Naive thymus-derived CD4-positive, alpha-beta T cell (primary cell): ENCODE measurements at regions of chr1 and their contacts with region 1.

Region 1: DNA sequence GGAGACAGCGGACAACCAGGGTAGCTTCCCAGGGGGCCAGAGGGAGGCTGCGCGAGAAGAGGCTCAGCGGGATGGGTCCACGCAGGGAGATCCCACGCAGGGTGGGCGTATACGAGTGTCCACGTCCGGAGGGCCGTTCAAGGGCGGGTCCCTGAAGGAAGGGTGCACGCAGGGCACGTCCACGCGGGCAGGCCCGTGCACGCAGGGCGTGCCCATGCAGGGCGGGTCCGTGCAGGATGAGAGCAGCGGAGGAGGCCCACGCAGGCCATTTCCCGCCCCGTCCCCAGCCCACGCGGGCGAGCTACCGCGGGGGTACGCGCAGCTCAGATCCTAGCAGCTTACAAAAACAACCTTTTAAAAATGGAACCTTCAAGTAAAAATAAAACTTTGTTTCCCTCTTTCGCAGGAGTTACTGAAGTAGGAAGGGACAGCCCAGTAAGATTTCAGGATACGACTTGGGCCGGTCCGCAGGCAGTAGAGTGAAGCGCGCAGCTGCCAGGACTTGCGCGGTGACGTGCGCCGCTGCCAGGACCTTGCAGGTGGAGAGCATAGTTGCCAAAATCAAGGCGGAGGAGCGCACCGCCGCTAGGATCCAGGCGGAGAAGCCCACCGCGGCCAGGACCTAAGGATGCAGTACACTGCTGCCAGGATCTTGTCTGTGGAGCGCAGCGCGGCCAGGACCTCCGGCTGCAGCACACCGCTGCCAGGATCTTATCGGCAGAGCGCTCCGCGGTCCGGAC is 416 bp upstream of the RNF187 start:
- DNase-seq: peak; percentile 76 to 91 (median 86)
- ATAC-seq: peak; percentile 85
- H3K4me3 ChIP-seq: peak overlapping the region; percentile 98
- H3K4me3 Mint-ChIP-seq: peak overlapping the region; percentile 92 to 99 (median 98)
- H3K27ac ChIP-seq: peak overlapping the region; percentile 99
- H3K27ac Mint-ChIP-seq: peak overlapping the region; percentile 99 to 100 (median 100)
- H3K4me1 ChIP-seq: peaks cover 15 to 19% of the 10 kb centered on the region in 2 donors
- H3K4me1 Mint-ChIP-seq: peaks cover 14 to 49% (median 36%) of the 10 kb centered on the region in 7 donors
- H3K27me3 ChIP-seq: no peaks in the 10 kb centered on the region
- H3K27me3 Mint-ChIP-seq: no peaks in the 10 kb centered on the region

Region 2: GRCh38 chr1:227816750-227817446 is 669.9 kb before region 1 on chr1:
- CTCF ChIA-PET with region 1: no interaction called
- POLR2A ChIA-PET with region 1: no interaction called
- intact Hi-C with region 1: no loop called
- DNase-seq: no peak
- ATAC-seq: peak; percentile 53
- H3K4me3 ChIP-seq: no peak overlapping the region
- H3K4me3 Mint-ChIP-seq: no peak overlapping the region
- H3K27ac ChIP-seq: no peak overlapping the region
- H3K27ac Mint-ChIP-seq: no peak overlapping the region
- H3K4me1 ChIP-seq: no peaks in the 10 kb centered on the region
- H3K4me1 Mint-ChIP-seq: peaks cover 0 to 5% (median 0%) of the 10 kb centered on the region in 7 donors
- H3K27me3 ChIP-seq: no peaks in the 10 kb centered on the region
- H3K27me3 Mint-ChIP-seq: peaks cover 0 to 5% (median 0%) of the 10 kb centered on the region in 5 donors

Region 3: DNA sequence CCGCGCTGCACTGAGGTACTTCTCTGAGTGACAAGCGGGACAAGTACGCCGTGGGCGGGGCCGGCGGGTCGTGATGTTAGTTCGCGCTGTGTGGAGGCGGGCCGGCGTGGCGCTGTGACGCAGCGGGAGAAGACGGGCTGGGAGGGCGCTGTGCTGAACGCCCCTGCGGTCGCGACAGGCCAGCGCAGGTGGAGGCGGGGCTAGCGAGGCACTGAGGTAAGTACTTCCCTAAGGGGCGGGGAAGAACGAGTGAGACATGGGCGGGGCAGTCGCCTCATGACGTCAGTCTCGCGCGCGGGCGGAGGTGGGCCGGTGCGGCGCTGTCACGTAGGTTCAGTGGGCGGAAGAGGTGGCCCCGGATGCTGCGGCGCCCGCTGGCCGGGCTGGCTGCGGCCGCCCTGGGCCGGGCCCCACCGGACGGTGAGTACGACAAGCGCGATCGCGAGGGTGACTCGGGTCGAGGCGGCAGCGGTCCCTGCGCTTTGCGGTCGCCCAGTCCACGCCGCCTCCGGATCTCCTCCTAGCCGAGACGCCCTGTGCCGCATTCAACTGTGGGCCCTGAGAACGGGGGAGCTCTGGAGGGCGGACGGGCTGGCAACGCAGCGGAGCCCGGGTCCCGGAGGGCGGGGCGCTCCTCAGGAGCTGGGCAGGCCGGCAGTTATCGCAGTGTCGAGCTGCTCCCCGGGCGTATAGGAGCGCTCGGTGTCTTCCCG is 346.7 kb before region 1 on chr1 and contains the start of gene GUK1:
- CTCF ChIA-PET with region 1: no interaction called
- POLR2A ChIA-PET with region 1: no interaction called
- intact Hi-C with region 1: loop called (anchors 1 kb)
- DNase-seq: peak; percentile 98 to 100 (median 100)
- ATAC-seq: peak; percentile 93
- H3K4me3 ChIP-seq: peak within 1 kb of the TSS; percentile 88
- H3K4me3 Mint-ChIP-seq: peak within 1 kb of the TSS; percentile 87 to 99 (median 95)
- H3K27ac ChIP-seq: peak within 1 kb of the TSS; percentile 99
- H3K27ac Mint-ChIP-seq: peak within 1 kb of the TSS; percentile 83 to 100 (median 99)
- H3K4me1 ChIP-seq: peaks cover 42 to 49% of the 10 kb centered on the region in 2 donors
- H3K4me1 Mint-ChIP-seq: peaks cover 23 to 48% (median 34%) of the 10 kb centered on the region in 7 donors
- H3K27me3 ChIP-seq: no peaks in the 10 kb centered on the region
- H3K27me3 Mint-ChIP-seq: peaks cover 0 to 24% (median 0%) of the 10 kb centered on the region in 5 donors
- total RNA-seq, gene GUK1: 145 to 309 (median 279) TPM

Region 4: DNA sequence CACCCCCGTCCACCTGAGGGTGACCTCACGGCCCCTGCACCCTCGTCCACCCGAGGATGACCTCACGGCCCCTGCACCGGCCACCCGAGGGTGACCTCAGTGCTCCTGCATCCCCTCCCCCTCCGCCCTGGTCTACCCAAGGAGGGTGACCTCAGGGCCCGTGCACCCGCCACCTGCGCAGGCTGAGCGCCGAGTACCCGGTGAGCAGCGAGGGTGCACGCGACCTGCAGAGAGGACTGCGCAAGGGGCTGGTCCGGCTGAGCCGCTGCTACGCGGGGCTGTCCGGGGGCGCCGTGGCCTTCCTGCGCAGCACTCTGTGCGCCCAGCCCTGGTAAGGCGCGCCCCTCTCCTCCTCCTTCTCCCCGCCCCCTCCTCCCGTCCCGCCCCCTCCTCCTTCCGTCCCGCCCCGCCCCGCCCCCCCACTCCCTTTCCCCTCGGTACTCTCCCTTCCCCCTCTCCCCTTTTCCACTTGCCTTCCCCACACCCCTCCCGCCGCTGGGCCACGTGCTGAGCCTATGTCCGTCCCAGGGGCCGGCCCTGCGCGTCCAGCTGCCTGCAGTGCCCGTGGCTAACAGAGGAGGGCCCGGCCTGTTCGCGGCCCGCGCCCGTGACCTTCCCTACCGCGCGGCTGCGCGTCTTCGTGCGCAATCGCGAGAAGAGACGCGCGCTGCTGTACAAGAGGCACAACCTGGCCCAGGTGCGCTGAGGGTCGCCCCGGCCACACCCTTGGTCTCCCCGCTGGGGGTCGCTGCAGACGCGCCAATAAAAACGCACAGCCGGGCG is 108.5 kb before region 1 on chr1:
- CTCF ChIA-PET with region 1: no interaction called
- POLR2A ChIA-PET with region 1: no interaction called
- intact Hi-C with region 1: loop called in 1 of 2 experiments (anchors 2 kb)
- DNase-seq: peak; percentile 37 to 75 (median 61)
- ATAC-seq: peak; percentile 58
- H3K4me3 ChIP-seq: peak overlapping the region; percentile 37
- H3K4me3 Mint-ChIP-seq: peak overlapping the region; percentile 80 to 90 (median 84)
- H3K27ac ChIP-seq: no peak overlapping the region
- H3K27ac Mint-ChIP-seq: peak overlapping the region in 4 of 9 donors; percentile 28 to 72 (median 51)
- H3K4me1 ChIP-seq: no peaks in the 10 kb centered on the region
- H3K4me1 Mint-ChIP-seq: peaks cover 6 to 18% (median 8%) of the 10 kb centered on the region in 7 donors
- H3K27me3 ChIP-seq: peaks cover 0 to 4% of the 10 kb centered on the region in 2 donors
- H3K27me3 Mint-ChIP-seq: peaks cover 0 to 42% (median 9%) of the 10 kb centered on the region in 5 donors

Region 5: DNA sequence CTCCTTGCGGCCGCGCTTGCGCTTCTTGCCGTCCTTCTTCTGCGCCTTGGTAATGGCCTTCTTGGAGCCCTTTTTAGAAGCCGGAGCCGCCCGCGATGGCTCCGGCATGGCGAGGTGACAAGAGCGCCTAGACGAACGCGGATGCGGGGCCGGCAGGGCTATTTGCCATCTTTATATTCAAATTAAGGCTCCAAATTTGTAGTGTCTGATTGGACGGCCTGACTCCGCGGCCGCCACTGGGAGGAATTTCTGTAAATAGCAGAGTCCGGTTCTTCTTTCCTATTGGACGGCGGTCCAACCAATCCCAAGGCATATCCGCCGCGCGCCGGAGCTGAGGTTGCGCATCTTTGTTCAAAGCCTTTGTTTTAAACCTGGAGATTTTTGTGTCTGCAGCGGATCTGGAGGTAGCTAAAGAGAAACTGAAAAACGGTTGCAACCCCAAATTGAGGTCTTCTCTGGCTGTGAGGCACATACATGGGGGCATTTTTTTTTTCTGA is 22.2 kb before region 1 on chr1:
- CTCF ChIA-PET with region 1: interaction called, 8 read pairs
- POLR2A ChIA-PET with region 1: interaction called, 38 read pairs
- intact Hi-C with region 1: loop called (anchors 1 kb)
- DNase-seq: peak; percentile 56 to 93 (median 85)
- ATAC-seq: peak; percentile 98
- H3K4me3 ChIP-seq: peak overlapping the region; percentile 62
- H3K4me3 Mint-ChIP-seq: peak overlapping the region; percentile 73 to 93 (median 82)
- H3K27ac ChIP-seq: peak overlapping the region; percentile 50
- H3K27ac Mint-ChIP-seq: peak overlapping the region; percentile 13 to 92 (median 62)
- H3K4me1 ChIP-seq: peaks cover 17 to 18% of the 10 kb centered on the region in 2 donors
- H3K4me1 Mint-ChIP-seq: peaks cover 24 to 66% (median 40%) of the 10 kb centered on the region in 7 donors
- H3K27me3 ChIP-seq: no peaks in the 10 kb centered on the region
- H3K27me3 Mint-ChIP-seq: peaks cover 11 to 34% (median 24%) of the 10 kb centered on the region in 5 donors

Region 6: DNA sequence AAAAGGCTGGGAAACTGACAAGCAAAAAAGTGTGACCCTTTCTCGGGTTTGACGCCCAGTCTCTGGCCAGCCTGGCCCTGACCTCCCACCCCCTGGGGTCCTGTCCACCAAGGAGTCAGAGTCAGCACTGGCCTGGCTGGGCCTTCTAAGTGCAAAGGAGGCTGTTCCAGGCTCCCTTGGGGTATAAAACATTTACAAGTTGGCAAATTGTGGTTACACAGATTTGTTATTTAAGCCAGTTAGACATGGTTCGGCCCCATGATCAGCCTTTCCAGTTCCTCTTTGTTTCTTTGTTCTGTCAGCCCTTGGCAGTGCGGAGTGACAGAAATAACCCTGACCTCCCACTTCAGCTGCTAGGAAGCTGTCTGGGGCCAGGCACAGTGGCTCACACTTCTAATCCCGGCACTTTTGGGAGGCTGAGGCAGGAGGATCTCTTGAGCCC is 622.6 kb after region 1 on chr1:
- CTCF ChIA-PET with region 1: no interaction called
- POLR2A ChIA-PET with region 1: no interaction called
- intact Hi-C with region 1: no loop called
- DNase-seq: no peak
- ATAC-seq: no peak
- H3K4me3 ChIP-seq: no peak overlapping the region
- H3K4me3 Mint-ChIP-seq: no peak overlapping the region
- H3K27ac ChIP-seq: no peak overlapping the region
- H3K27ac Mint-ChIP-seq: no peak overlapping the region
- H3K4me1 ChIP-seq: peaks cover 0 to 3% of the 10 kb centered on the region in 2 donors
- H3K4me1 Mint-ChIP-seq: peaks cover 4 to 19% (median 10%) of the 10 kb centered on the region in 7 donors
- H3K27me3 ChIP-seq: no peaks in the 10 kb centered on the region
- H3K27me3 Mint-ChIP-seq: peaks cover 0 to 12% (median 0%) of the 10 kb centered on the region in 5 donors

Region 7: DNA sequence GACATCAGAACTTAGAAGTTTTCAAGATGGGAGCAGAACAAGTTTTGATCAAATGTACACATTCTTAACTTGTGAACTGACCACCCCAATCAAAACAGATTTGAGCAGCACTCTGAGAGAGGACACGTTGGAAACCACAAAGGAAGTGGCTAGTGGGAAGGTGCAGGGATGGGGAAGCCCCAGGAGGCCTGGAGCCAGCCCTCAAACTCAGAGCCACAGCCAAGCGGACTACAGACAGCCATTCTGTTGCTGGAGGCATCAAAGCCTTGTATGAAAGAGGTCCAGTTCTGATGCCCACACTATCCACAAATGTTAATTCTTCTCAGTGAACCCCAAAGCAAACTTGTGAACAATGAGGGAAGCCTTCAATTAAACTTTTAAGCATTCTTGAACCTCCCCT is 640.5 kb after region 1 on chr1:
- CTCF ChIA-PET with region 1: no interaction called
- POLR2A ChIA-PET with region 1: no interaction called
- intact Hi-C with region 1: no loop called
- DNase-seq: peak in 1 of 9 donors; percentile 34
- ATAC-seq: no peak
- H3K4me3 ChIP-seq: no peak overlapping the region
- H3K4me3 Mint-ChIP-seq: peak overlapping the region in 8 of 10 donors; percentile 4 to 60 (median 40)
- H3K27ac ChIP-seq: no peak overlapping the region
- H3K27ac Mint-ChIP-seq: peak overlapping the region in 4 of 9 donors; percentile 57 to 92 (median 80)
- H3K4me1 ChIP-seq: peaks cover 41 to 46% of the 10 kb centered on the region in 2 donors
- H3K4me1 Mint-ChIP-seq: peaks cover 26 to 66% (median 56%) of the 10 kb centered on the region in 7 donors
- H3K27me3 ChIP-seq: no peaks in the 10 kb centered on the region
- H3K27me3 Mint-ChIP-seq: peaks cover 0 to 61% (median 0%) of the 10 kb centered on the region in 5 donors

Region 8: DNA sequence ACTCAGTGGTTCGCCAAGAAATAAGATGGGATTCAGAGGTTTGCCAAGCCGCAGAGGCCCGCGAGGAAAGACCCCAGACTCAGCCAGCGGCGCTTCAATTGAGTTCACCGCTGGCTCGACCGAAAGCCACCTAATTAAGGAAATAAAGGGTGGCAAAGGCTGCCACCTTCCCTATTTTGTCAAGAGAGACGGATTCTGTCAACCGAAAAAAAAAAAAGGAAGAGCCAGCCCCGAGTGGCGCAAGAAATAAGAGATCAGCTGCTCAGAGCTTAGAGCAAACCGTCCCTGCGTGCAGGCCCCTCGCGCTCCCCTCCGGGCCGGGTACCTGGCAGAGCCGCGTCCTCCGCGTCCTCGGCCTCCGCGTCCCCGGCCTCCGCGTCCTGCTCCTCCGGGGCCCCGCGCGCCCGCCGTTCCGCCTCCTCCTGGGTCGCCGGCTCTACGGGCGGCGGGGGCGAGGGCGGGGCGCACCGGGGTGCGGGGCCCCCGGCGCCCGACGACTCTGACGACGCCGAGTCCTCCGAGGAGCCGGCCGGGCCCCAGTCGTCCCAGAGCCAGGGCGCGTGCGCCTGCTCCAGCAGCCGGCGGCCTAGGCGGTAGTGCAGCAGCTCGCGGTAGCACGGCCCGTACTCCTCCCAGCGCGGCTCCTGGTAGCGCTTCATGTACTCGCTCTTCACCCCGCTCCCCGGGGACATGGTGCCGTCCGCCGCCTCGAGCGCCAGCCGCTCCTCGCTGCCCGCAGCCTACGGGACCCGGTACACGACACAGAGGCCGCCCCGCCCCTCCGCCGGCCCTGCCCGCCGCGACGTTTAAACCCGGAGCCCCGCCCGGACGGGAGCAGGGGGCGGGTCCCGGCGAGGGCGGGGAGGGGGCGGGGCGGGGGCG is 855.2 kb after region 1 on chr1:
- CTCF ChIA-PET with region 1: no interaction called
- POLR2A ChIA-PET with region 1: no interaction called
- intact Hi-C with region 1: loop called in 1 of 2 experiments (anchors 10 kb)
- DNase-seq: peak; percentile 78 to 87 (median 84)
- ATAC-seq: peak; percentile 92
- H3K4me3 ChIP-seq: peak overlapping the region; percentile 87
- H3K4me3 Mint-ChIP-seq: peak overlapping the region; percentile 88 to 96 (median 93)
- H3K27ac ChIP-seq: peak overlapping the region; percentile 88
- H3K27ac Mint-ChIP-seq: peak overlapping the region; percentile 72 to 93 (median 89)
- H3K4me1 ChIP-seq: peaks cover 5 to 7% of the 10 kb centered on the region in 2 donors
- H3K4me1 Mint-ChIP-seq: peaks cover 32 to 59% (median 49%) of the 10 kb centered on the region in 7 donors
- H3K27me3 ChIP-seq: no peaks in the 10 kb centered on the region
- H3K27me3 Mint-ChIP-seq: peaks cover 0 to 23% (median 7%) of the 10 kb centered on the region in 5 donors